ENCODE measurements at regions of chr17 and their contacts with region 1.

Region 1: DNA sequence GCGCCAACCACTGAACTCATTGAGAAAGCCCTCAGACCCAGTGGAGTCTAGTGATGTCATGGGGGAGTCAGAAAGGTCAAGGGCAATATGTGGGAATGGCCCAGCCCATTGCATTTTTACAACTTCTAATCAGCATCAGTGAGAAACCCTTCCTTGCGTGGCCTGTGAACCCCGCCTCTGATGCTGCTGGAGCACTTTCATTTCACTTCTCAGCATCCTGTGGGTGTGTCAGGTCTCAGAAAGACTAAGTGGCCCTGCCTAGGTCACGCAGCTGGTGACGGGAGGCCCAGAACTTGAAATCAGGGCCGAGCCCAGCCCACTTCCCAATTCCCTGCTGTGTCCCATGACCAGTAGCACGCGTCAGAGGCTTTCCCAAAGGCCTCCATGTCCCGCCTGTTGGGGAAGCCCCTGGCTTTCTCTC is 6.1 kb downstream of the DNAI2 start:
- DNase-seq: peak; percentile 90
- H3K4me3 Mint-ChIP-seq: peak overlapping the region; percentile 42
- H3K27ac Mint-ChIP-seq: peak overlapping the region; percentile 90
- H3K4me1 Mint-ChIP-seq: peaks cover 42% of the 10 kb centered on the region
- H3K27me3 Mint-ChIP-seq: no peaks in the 10 kb centered on the region

Region 2: GRCh38 chr17:74212913-74213791 is 67.0 kb before region 1 on chr17 and contains the start of gene TTYH2:
- intact Hi-C with region 1: loop called (anchors 2 kb)
- DNase-seq: peak; percentile 93
- H3K4me3 Mint-ChIP-seq: peak within 1 kb of the TSS; percentile 82
- H3K27ac Mint-ChIP-seq: peak within 1 kb of the TSS; percentile 72
- H3K4me1 Mint-ChIP-seq: peaks cover 47% of the 10 kb centered on the region
- H3K27me3 Mint-ChIP-seq: no peaks in the 10 kb centered on the region
- total RNA-seq, gene TTYH2: 7.8 and 8.1 TPM in 2 replicates

Region 3: GRCh38 chr17:74296548-74296936 is 16.4 kb after region 1 on chr17:
- intact Hi-C with region 1: loop called (anchors 2 kb)
- DNase-seq: peak; percentile 82
- H3K4me3 Mint-ChIP-seq: no peak overlapping the region
- H3K27ac Mint-ChIP-seq: peak overlapping the region; percentile 41
- H3K4me1 Mint-ChIP-seq: peaks cover 18% of the 10 kb centered on the region
- H3K27me3 Mint-ChIP-seq: peaks cover 6% of the 10 kb centered on the region

Region 4: DNA sequence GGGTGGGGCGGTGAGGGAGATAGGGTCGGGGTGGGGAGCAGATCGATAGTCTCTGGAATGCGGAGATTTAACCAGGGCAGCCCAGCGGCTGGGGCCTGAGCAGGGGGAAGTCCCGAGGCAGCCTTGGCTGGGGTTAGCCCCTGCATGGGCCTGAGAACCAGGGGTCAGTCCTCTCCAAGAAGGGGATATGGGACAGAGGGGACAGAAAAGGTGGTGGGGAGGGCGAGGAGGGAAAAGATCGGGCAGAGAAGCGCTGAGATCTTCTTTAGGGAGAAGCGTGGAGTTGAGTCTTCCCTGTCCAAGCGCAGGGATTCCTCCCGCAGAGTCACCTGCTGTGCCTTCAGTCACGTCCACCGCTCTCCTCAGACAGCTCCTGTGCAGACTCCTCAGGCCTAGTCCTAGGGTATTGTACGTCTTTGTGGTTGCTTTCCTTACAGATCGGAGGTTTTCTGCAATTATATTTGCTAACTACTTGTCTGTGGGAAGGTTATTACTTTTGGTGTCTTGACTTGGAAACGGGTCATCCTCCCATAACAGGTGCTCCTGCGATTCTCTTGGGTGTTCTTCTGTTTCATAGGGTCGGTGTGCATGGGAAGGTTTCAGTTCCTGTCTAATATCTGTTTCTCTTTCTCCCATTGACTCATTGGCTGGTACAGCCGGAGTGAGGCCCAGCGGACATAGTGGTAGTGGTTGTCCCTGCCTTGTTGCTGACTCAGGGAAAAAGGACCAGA is 187.3 kb after region 1 on chr17:
- intact Hi-C with region 1: loop called (anchors 5 kb)
- DNase-seq: peak; percentile 73
- H3K4me3 Mint-ChIP-seq: no peak overlapping the region
- H3K27ac Mint-ChIP-seq: peak overlapping the region; percentile 73
- H3K4me1 Mint-ChIP-seq: peaks cover 48% of the 10 kb centered on the region
- H3K27me3 Mint-ChIP-seq: no peaks in the 10 kb centered on the region

Region 5: GRCh38 chr17:74513987-74514631 is 234.0 kb after region 1 on chr17:
- intact Hi-C with region 1: loop called (anchors 10 kb)
- DNase-seq: peak; percentile 90
- H3K4me3 Mint-ChIP-seq: peak overlapping the region; percentile 34
- H3K27ac Mint-ChIP-seq: peak overlapping the region; percentile 94
- H3K4me1 Mint-ChIP-seq: peaks cover 27% of the 10 kb centered on the region
- H3K27me3 Mint-ChIP-seq: peaks cover 14% of the 10 kb centered on the region